CD8-positive, alpha-beta memory T cell (primary cell): ENCODE measurements at regions of chr11 and their contacts with region 1.

Region 1: DNA sequence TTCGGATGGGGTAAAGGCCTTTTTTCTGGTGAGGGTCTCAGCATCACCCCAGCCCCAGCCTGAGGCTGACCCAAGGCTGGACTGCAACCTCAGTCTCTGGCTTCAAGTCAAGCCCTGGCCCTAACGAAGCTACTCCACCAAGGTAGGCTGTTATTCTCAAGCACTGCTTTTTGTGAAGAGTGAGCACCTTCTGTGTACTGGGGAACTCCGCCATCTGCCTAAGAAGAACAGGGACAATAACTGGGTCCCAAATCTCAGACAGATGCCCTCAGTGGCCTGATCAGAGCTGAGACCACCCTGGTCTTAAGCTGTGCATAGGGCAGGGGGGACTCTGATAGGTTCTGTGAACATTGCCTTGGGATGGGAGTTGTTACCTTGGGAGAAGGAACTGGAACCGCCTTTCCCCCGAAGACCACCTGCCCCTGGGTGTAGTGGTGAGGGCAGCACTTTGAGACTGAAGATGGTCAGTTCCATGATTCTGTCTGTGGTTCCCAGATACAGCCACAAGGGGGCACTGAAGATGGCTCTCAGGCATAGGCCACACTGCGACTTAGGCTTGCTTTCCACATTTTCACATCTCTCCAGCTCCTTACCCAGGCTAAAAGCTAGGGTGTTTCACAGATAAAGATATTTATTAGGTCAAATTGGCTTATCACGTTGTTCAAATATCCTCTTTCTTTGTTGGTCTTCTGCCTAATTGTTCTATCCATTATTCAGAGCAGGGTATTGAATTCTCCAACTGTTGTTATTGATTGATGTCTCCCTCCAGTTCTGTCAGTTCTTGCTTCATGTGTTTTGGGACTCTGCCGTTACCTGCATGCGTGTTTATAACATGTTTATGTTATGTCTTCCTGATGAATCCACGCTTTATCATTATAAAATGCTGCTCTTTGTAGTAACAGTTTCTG is 11.8 kb upstream of the UVRAG start:
- DNase-seq: peak; percentile 47 to 77 (median 56)
- H3K4me3 ChIP-seq: no peak overlapping the region
- H3K4me3 Mint-ChIP-seq: no peak overlapping the region
- H3K27ac ChIP-seq: no peak overlapping the region
- H3K27ac Mint-ChIP-seq: no peak overlapping the region
- H3K4me1 ChIP-seq: peaks cover 12% of the 10 kb centered on the region
- H3K4me1 Mint-ChIP-seq: peaks cover 6 to 14% (median 9%) of the 10 kb centered on the region in 3 donors
- H3K27me3 ChIP-seq: no peaks in the 10 kb centered on the region
- H3K27me3 Mint-ChIP-seq: peaks cover 2 to 3% of the 10 kb centered on the region in 2 donors

Region 2: DNA sequence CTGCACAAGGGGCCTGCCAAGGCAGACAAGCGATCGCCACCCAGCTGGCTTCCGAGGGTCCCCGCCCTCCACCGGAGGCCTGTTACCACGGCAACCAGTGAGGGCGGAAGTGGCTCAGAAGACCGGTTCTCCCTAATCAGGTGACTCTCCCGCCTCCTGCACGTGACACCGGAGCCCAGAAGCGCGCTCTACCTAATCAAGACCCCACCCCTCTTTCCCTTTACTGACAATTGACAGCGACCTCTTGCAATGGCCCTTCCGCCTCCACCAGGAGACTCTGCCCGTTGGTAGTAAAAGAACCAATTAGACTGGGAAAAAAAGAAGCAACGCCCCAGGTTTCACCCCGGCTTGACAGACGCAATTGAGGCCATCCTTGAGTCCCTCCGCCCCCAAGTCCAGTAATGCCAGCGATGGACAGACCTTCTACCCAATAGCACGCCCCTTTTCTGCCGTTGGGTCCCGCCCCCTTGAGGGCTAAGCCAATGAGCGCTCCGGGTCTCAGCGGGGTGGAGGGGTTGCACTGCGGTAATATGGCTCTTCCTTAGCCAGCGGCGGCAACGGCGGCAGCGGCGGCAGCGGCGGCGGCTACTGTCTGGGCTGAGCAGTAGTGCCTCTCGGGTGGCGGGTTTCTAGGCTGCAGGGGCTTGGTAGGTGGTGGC is 11.6 kb after region 1 on chr11 and contains the start of gene UVRAG:
- CTCF ChIA-PET with region 1: interaction called, 35 read pairs
- POLR2A ChIA-PET with region 1: no interaction called
- DNase-seq: peak; percentile 97 to 99 (median 99)
- H3K4me3 ChIP-seq: peak within 1 kb of the TSS; percentile 69
- H3K4me3 Mint-ChIP-seq: peak within 1 kb of the TSS in 3 of 7 donors; percentile 89 to 99 (median 96)
- H3K27ac ChIP-seq: peak within 1 kb of the TSS; percentile 75
- H3K27ac Mint-ChIP-seq: peak within 1 kb of the TSS in 7 of 8 donors; percentile 91 to 100 (median 99)
- H3K4me1 ChIP-seq: peaks cover 25% of the 10 kb centered on the region
- H3K4me1 Mint-ChIP-seq: peaks cover 18 to 26% (median 26%) of the 10 kb centered on the region in 3 donors
- H3K27me3 ChIP-seq: no peaks in the 10 kb centered on the region
- H3K27me3 Mint-ChIP-seq: peaks cover 0 to 6% of the 10 kb centered on the region in 2 donors
- total RNA-seq, gene UVRAG: 18.0 to 20.9 TPM

Region 3: DNA sequence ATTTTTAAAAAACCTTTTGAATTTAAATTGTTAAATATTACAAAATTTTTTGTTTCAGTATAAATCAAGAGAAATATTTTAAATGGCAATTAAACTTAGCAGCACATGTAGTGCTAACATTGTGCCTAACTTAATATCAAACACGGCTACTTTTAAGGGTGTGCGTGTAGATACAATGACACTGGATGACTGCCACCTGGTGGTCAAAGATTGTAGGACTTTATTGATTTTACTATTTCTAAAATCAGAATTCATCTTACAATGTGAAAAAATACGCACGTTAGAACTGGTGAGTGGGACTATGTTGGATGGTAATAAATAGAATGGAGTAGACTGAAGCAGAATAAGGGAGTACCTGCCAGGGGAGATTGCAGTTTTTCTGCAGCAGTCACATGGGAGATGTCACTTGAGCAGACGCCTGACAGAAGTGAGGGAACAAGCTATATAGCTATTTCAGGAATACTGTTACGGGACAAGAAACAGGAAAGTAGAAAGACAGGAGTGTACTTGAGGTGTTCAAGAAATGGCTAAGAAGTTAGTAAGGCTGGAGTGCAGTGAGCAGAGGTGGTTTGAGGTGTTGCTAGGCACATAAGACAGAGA is 64.7 kb after region 1 on chr11:
- CTCF ChIA-PET with region 1: interaction called, 94 read pairs
- POLR2A ChIA-PET with region 1: no interaction called
- DNase-seq: peak; percentile 17 to 51 (median 34)
- H3K4me3 ChIP-seq: no peak overlapping the region
- H3K4me3 Mint-ChIP-seq: no peak overlapping the region
- H3K27ac ChIP-seq: no peak overlapping the region
- H3K27ac Mint-ChIP-seq: no peak overlapping the region
- H3K4me1 ChIP-seq: no peaks in the 10 kb centered on the region
- H3K4me1 Mint-ChIP-seq: peaks cover 4 to 17% (median 6%) of the 10 kb centered on the region in 3 donors
- H3K27me3 ChIP-seq: no peaks in the 10 kb centered on the region
- H3K27me3 Mint-ChIP-seq: no peaks in the 10 kb centered on the region

Region 4: DNA sequence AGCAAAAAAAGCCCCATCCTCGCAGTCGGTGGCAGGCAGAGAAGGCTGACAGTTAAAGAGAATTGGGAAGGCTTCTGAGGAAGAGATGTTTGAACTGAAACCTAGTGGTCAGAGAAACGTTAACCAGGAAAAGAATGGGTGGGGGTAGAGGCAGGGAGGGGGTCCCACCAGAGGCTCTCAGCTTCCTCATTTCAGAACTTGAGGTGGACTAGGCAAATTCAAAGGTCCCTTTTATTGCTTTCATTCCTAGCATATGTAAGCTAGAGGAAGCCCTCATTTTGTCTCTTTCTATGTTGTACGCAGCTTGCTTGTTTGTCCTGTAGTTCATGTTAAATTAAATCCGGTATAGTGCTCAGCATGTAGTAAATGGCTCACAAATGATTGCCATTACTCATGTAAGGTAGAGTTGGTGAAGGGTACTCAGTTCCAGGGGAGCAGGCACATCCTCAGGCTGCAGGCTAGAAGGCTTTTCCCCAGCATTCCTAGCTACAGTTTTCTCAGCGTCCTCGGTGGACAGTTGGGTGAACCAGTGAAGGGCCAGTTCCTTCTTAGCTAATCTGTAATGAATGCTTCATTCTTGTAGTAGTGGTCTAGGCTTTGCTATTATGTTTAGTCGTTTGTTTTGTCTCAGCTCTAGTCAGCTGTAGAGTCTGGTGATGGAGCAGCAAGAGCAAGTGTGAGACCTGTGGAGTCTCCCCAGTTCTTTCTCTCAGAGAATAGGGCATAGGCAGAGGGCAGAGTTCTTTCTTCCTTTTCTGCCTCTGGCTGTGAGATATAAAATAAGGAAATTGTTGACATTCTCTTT is 70.5 kb after region 1 on chr11:
- CTCF ChIA-PET with region 1: interaction called, 94 read pairs
- POLR2A ChIA-PET with region 1: interaction called, 3 read pairs
- DNase-seq: no peak
- H3K4me3 ChIP-seq: no peak overlapping the region
- H3K4me3 Mint-ChIP-seq: no peak overlapping the region
- H3K27ac ChIP-seq: no peak overlapping the region
- H3K27ac Mint-ChIP-seq: peak overlapping the region in 2 of 8 donors; percentile 6 to 15
- H3K4me1 ChIP-seq: no peaks in the 10 kb centered on the region
- H3K4me1 Mint-ChIP-seq: peaks cover 5 to 15% (median 7%) of the 10 kb centered on the region in 3 donors
- H3K27me3 ChIP-seq: no peaks in the 10 kb centered on the region
- H3K27me3 Mint-ChIP-seq: no peaks in the 10 kb centered on the region

Region 5: DNA sequence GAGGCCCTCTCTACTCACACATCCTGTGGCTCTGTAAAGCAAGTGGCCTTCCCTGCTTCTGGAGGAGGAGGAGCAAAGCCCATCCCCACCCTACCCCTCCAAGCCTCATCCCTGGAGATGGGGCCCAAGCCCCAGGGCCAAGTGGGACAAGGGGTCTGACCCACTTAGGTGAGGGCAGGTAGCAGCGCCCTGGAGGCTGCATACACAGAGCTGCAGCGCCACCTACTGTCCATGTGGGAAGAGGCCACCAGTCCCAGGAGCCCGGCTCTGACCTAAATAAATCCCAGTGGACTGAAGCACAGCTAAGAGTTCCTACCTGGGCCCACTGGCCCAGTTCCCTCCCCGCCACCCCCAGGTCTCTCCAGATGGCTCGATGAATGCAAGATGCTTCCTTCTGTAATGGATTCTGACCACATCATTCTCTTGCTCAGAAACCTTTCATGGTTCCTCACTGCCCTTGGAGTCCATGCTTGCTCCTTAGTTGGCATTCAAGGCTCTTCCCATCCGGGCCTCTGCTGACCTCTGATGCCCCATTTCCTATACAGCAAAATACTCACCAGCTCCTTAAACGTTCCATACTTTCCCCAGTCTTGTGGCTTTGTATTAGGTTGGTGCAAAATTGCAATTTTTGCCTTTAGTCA is 515.7 kb after region 1 on chr11:
- CTCF ChIA-PET with region 1: interaction called, 12 read pairs
- POLR2A ChIA-PET with region 1: no interaction called
- DNase-seq: peak; percentile 72 to 88 (median 77)
- H3K4me3 ChIP-seq: no peak overlapping the region
- H3K4me3 Mint-ChIP-seq: no peak overlapping the region
- H3K27ac ChIP-seq: no peak overlapping the region
- H3K27ac Mint-ChIP-seq: no peak overlapping the region
- H3K4me1 ChIP-seq: no peaks in the 10 kb centered on the region
- H3K4me1 Mint-ChIP-seq: no peaks in the 10 kb centered on the region
- H3K27me3 ChIP-seq: peaks cover 15% of the 10 kb centered on the region
- H3K27me3 Mint-ChIP-seq: peaks cover 26 to 41% of the 10 kb centered on the region in 2 donors